ENCODE measurements at regions of chr2 and their contacts with region 1.

Region 1: GRCh38 chr2:16756831-16757644 is 91.4 kb upstream of the CYRIA start:
- DNase-seq: peak; percentile 28
- H3K4me3 ChIP-seq: no peak overlapping the region
- CTCF ChIP-seq: peak; percentile 71

Region 2: DNA sequence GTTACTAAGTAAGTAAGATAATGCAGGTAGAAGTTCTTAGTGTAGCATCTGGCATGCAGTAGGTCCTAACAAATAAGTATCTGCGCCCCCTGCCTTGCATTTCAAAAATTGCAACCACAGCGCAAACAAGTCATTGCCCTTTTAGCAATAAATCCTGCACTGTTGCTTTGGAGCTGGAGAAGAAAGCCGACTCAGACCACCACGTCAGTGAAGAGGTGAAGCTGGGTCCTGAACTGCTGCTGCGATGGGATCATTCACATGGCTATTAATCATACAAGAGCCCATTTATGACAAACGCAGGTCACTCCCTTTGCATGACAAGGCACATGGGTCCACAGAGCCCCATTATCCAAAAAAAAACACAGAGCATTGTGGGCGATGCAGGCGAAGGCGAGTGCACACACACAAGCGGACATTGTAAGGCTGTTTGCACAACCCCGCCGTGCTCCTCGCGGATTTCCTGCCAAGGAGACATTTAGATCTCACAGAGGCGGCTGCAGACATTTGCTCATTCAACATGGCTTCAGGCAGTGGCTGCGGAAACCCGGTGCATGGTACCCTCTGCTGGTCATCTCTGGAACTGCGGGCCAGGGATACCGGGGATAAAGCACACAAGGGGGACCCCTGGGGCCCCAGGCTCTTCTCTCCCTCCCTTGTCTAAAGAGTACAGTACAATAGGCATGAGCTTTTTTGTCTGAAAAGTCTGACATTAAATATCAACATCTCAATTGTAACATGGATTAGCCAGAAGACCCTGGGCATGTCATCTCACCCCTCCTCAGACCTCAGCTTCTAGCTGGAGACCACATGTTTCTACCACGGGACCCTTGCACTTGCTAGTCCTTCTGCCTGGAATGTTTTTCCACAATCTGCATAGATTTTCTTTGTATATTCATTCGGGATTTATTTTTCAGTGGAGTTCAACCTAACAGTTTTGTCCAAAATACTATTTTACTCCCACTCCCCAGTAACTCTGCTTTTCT is 148.1 kb before region 1 on chr2:
- in situ Hi-C with region 1: loop called (anchors 25 kb)
- DNase-seq: no peak
- H3K4me3 ChIP-seq: peak overlapping the region; percentile 35
- CTCF ChIP-seq: peak; percentile 99

Measured in astrocyte of the cerebellum (primary cell).